ENCODE measurements at regions of chr19 and their contacts with region 1.

Region 1: DNA sequence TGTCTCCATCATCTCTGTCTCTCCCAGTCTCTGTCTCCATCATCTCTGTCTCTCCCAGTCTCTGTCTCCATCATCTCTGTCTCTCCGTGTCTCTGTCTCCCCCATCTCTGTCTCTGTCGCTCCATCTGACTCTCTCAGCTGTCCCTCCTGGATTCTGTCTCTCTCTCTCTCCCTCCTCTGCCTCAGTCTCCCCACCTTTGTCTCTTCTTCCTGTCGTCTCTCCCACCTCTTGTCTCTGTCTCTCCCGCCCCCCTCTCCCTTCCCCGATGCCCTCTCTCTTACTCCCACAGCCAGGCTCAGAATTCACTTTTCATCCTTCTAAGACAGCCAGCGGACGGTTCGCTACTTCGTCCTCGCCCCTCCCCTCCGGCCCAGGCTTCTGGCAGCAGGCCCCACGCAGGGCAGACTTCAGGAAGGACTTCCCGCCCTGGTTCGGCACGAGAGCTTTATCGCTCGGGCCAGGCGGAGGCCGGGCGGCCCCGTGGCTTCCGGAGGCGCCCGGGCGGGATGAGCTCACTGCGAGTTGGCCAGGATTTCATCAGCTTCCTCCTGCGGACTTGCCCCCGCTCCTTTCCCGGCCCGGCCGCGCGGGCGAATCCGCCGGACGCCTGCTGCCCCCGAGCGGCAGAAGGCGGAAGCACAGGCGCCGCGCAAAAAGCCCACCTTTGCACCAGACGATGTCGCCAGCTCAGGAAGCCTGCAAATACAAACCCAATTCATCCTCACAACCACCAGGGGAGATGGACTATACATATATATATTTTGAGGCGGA is 12.4 kb upstream of the CCDC9 start:
- DNase-seq: peak; percentile 95
- ATAC-seq: peak; percentile 61
- H3K4me3 Mint-ChIP-seq: peak overlapping the region; percentile 64
- H3K27ac Mint-ChIP-seq: peak overlapping the region; percentile 82
- H3K4me1 Mint-ChIP-seq: peaks cover 19% of the 10 kb centered on the region
- H3K27me3 Mint-ChIP-seq: peaks cover 45% of the 10 kb centered on the region
- CTCF ChIP-seq: peak; percentile 88

Region 2: DNA sequence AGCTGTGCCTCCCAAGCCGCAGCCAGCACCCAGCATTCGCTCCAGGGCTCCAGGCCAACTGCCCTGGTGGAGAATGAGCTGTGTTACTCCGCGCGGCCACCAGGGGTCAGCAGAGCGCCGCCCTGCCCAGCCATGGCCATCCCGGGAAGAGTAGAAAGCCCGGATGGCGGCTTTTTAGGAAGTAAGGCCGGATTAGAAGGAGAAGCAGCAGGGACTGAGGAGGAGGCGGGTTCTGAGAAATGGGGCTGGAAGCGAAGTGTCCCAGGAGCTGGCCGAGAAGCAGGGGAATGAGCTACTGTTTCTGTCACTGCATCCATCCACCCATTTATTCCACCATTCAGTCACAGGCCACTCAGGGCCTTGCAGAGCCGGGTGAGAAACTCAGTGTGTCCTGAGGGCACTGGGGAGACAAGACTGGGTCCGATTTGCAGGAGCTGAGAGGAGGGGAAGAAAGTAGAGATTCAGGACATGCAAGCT is 230.9 kb before region 1 on chr19:
- CTCF ChIA-PET with region 1: interaction called, 17 read pairs
- POLR2A ChIA-PET with region 1: no interaction called
- DNase-seq: peak; percentile 91
- ATAC-seq: peak; percentile 96
- H3K4me3 Mint-ChIP-seq: no peak overlapping the region; the same call in 1 of the 2 replicates
- H3K27ac Mint-ChIP-seq: peak overlapping the region; percentile 81
- H3K4me1 Mint-ChIP-seq: peaks cover 4% of the 10 kb centered on the region
- H3K27me3 Mint-ChIP-seq: peaks cover 34% of the 10 kb centered on the region
- CTCF ChIP-seq: peak; percentile 98

Region 3: DNA sequence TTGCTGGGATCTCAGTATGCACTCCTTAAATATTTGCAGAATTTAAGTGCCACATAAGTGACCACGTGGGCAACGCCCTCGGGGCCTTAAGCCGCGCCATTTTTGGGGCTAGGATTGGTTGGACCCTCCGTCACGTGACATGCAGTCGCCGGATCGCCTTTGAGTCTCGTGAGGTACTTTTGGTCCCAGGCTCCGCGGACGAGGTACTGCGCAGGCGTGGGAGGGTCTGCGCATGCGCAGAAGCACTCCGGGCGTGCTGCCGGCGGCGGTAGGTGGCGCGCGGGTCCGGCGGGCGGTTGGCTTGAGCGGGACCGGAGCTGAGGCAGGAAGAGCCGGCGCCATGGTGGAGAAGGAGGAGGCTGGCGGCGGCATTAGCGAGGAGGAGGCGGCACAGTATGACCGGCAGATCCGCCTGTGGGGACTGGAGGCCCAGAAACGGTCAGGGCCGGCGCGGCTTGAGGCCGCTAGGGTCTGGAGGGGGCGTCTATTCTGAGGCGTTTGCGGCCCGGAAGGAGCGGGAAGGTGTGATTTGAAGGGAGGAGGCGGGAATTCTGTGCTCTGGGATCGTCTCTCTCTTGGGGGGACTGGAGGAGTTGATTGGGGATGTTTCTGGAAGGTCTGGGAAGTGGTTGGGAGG is 113.3 kb before region 1 on chr19 and contains the start of gene SAE1:
- CTCF ChIA-PET with region 1: interaction called, 19 read pairs
- POLR2A ChIA-PET with region 1: interaction called, 3 read pairs
- DNase-seq: peak; percentile 97
- ATAC-seq: peak; percentile 88
- H3K4me3 Mint-ChIP-seq: peak within 1 kb of the TSS; percentile 96
- H3K27ac Mint-ChIP-seq: peak within 1 kb of the TSS; percentile 95
- H3K4me1 Mint-ChIP-seq: peaks cover 38% of the 10 kb centered on the region
- H3K27me3 Mint-ChIP-seq: peaks cover 11% of the 10 kb centered on the region
- CTCF ChIP-seq: no peak
- total RNA-seq, gene SAE1: 215 to 224 TPM (median 221 TPM) in 3 replicates

Region 4: DNA sequence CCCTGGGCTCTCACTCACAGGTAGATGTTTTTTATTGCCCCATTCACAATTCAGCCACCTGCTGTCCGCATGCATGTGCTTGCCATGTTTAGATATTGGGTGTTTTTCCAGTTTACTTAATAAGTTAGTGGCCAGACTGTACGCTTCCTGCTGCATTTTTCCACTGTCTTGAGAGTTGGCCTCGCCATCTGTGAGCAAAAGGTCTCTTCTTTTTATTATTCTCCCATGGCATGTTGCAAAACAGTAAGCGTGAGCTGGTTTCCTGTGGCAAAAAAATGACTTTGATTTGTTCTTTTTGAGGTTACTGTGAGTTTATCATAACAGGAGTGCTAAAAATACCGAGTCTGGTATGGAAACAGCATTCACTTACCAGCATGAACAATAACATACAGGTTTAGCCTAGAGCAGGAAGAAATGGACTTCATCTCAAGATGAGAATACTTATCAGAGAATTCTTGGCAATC is 67.3 kb before region 1 on chr19:
- CTCF ChIA-PET with region 1: interaction called, 10 read pairs
- POLR2A ChIA-PET with region 1: no interaction called
- DNase-seq: no peak
- ATAC-seq: no peak
- H3K4me3 Mint-ChIP-seq: no peak overlapping the region
- H3K27ac Mint-ChIP-seq: peak overlapping the region; percentile 81
- H3K4me1 Mint-ChIP-seq: peaks cover 13% of the 10 kb centered on the region
- H3K27me3 Mint-ChIP-seq: no peaks in the 10 kb centered on the region
- CTCF ChIP-seq: no peak

Region 5: DNA sequence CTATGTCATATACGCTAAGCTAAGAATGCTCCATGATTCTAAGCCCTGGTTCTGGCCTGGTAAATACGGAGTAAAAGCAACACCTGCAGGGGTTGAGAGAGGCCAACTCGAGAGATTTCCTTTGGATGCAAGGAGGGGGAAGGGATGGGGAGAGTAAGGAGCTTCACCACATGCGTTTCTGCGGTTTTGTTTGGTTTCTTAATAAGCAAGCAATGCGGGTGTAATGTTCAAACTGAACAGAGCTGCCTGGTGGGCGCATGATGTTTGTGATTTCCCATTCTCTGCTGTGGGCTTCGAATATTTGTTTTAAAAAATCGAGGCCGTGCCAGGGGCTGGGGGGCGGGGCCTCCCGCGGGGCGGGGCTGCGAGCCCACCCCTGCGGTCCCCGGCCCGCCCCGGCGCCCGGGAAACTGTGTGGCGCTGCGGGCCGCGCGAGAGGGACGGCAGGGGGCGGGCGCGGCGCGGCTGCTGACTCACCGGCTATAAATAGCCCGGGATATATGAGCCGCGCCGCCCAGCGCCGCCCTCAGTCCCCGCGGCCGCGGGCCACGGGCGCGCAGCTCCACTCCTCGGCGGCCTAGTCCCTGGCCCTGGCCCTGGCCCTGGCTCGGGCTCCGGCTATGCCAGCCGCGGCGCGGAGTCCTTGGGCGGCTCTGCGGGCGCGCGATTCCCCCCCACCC is 18.1 kb before region 1 on chr19:
- CTCF ChIA-PET with region 1: interaction called, 136 read pairs
- POLR2A ChIA-PET with region 1: interaction called, 61 read pairs
- DNase-seq: peak; percentile 84
- ATAC-seq: peak; percentile 18
- H3K4me3 Mint-ChIP-seq: peak overlapping the region; percentile 43
- H3K27ac Mint-ChIP-seq: peak overlapping the region; percentile 95
- H3K4me1 Mint-ChIP-seq: peaks cover 16% of the 10 kb centered on the region
- H3K27me3 Mint-ChIP-seq: no peaks in the 10 kb centered on the region; the same call in 1 of the 2 replicates
- CTCF ChIP-seq: no peak

Region 6: GRCh38 chr19:47273313-47273977 is 29.5 kb after region 1 on chr19:
- CTCF ChIA-PET with region 1: interaction called, 33 read pairs
- POLR2A ChIA-PET with region 1: interaction called, 8 read pairs
- DNase-seq: peak; percentile 93
- ATAC-seq: peak; percentile 63
- H3K4me3 Mint-ChIP-seq: peak overlapping the region; percentile 91
- H3K27ac Mint-ChIP-seq: peak overlapping the region; percentile 99
- H3K4me1 Mint-ChIP-seq: peaks cover 16% of the 10 kb centered on the region
- H3K27me3 Mint-ChIP-seq: peaks cover 18% of the 10 kb centered on the region
- CTCF ChIP-seq: no peak

Region 7: GRCh38 chr19:47336853-47337279 is 92.9 kb after region 1 on chr19:
- CTCF ChIA-PET with region 1: no interaction called
- POLR2A ChIA-PET with region 1: no interaction called
- DNase-seq: no peak
- ATAC-seq: peak; percentile 63
- H3K4me3 Mint-ChIP-seq: no peak overlapping the region
- H3K27ac Mint-ChIP-seq: peak overlapping the region; percentile 4
- H3K4me1 Mint-ChIP-seq: peaks cover 5% of the 10 kb centered on the region
- H3K27me3 Mint-ChIP-seq: peaks cover 4% of the 10 kb centered on the region; the same call in 1 of the 2 replicates
- CTCF ChIP-seq: no peak

Region 8: GRCh38 chr19:47357788-47358680 is 114.1 kb after region 1 on chr19:
- CTCF ChIA-PET with region 1: no interaction called
- POLR2A ChIA-PET with region 1: no interaction called
- DNase-seq: peak; percentile 62
- ATAC-seq: peak; percentile 72
- H3K4me3 Mint-ChIP-seq: no peak overlapping the region
- H3K27ac Mint-ChIP-seq: no peak overlapping the region
- H3K4me1 Mint-ChIP-seq: no peaks in the 10 kb centered on the region
- H3K27me3 Mint-ChIP-seq: no peaks in the 10 kb centered on the region
- CTCF ChIP-seq: no peak